ENCODE measurements at regions of chr14 and their contacts with region 1.

Region 1: GRCh38 chr14:24431569-24432258 is 2.0 kb downstream of the KHNYN start:
- DNase-seq: peak; percentile 93 to 96
- H3K4me3 ChIP-seq: peak overlapping the region; percentile 69 to 81 (median 76)
- H3K27ac ChIP-seq: peak overlapping the region; percentile 43 to 99 (median 98)
- H3K4me1 ChIP-seq: peaks cover 51 to 85% (median 81%) of the 10 kb centered on the region in 4 donors
- H3K27me3 ChIP-seq: no peaks in the 10 kb centered on the region
- CTCF ChIP-seq: peak in 5 of 7 experiments; percentile 82 to 98 (median 94)
- EP300 ChIP-seq: no peak
- POLR2A ChIP-seq: no peak

Region 2: GRCh38 chr14:24332268-24332993 is 99.3 kb before region 1 on chr14:
- intact Hi-C with region 1: loop called (anchors 5 kb)
- DNase-seq: peak; percentile 82 to 91
- H3K4me3 ChIP-seq: peak overlapping the region; percentile 31 to 54 (median 36)
- H3K27ac ChIP-seq: peak overlapping the region in 3 of 5 donors; percentile 38 to 81 (median 47)
- H3K4me1 ChIP-seq: peaks cover 34 to 86% (median 39%) of the 10 kb centered on the region in 4 donors
- H3K27me3 ChIP-seq: peaks cover 0 to 29% (median 8%) of the 10 kb centered on the region in 3 donors
- CTCF ChIP-seq: peak in 5 of 7 experiments; percentile 63 to 87 (median 83)
- EP300 ChIP-seq: no peak
- POLR2A ChIP-seq: no peak

Region 3: DNA sequence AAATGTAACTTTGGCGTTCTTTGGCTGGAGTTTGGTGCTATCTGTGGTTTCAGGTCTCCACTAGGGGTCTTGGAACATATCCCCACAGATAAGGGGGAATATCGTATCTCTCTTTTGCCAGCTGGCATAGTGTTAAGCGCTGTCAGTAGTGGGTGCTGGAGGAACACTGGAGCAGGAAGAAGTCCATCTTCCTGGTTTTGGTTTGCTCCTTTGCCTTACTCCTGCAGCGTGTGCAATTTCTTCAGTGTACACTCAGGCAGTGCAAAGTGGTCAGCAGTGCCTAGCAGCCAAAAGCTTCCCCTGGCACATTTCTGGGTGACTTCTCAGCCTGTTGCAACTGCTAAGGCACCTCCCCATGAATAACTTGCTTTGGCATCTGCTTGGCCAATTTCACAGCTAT is 80.2 kb before region 1 on chr14:
- intact Hi-C with region 1: no loop called
- DNase-seq: peak in 1 of 2 donors; percentile 60
- H3K4me3 ChIP-seq: no peak overlapping the region
- H3K27ac ChIP-seq: no peak overlapping the region
- H3K4me1 ChIP-seq: peaks cover 0 to 22% (median 11%) of the 10 kb centered on the region in 4 donors
- H3K27me3 ChIP-seq: peaks cover 0 to 8% (median 0%) of the 10 kb centered on the region in 3 donors
- CTCF ChIP-seq: no peak
- EP300 ChIP-seq: no peak
- POLR2A ChIP-seq: no peak

Region 4: DNA sequence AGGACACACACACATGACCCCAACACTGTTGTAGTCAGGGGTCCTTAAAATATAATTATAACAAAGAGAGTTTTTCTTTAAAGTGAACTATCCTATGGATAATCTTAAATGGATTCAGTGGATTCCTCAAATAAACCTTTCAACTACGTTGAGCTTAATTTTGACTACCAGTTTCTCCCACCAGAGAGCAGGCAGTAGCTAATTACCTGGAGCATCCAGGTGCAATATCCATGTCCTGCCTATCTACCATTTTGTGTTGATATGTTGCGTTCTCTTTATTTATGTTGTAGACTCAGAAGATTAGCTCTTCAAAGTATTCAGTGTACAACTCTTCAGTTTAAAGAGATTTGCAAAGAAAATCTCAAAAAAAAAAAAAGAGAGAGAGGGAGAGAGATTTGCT is 329.4 kb after region 1 on chr14:
- intact Hi-C with region 1: no loop called
- DNase-seq: no peak
- H3K4me3 ChIP-seq: no peak overlapping the region
- H3K27ac ChIP-seq: no peak overlapping the region
- H3K4me1 ChIP-seq: no peaks in the 10 kb centered on the region
- H3K27me3 ChIP-seq: no peaks in the 10 kb centered on the region
- CTCF ChIP-seq: no peak
- EP300 ChIP-seq: no peak
- POLR2A ChIP-seq: no peak

Measured in stomach (tissue), 19 donors.